GM23248 (cell line): ENCODE measurements at regions of chr4 and their contacts with region 1.

Region 1: DNA sequence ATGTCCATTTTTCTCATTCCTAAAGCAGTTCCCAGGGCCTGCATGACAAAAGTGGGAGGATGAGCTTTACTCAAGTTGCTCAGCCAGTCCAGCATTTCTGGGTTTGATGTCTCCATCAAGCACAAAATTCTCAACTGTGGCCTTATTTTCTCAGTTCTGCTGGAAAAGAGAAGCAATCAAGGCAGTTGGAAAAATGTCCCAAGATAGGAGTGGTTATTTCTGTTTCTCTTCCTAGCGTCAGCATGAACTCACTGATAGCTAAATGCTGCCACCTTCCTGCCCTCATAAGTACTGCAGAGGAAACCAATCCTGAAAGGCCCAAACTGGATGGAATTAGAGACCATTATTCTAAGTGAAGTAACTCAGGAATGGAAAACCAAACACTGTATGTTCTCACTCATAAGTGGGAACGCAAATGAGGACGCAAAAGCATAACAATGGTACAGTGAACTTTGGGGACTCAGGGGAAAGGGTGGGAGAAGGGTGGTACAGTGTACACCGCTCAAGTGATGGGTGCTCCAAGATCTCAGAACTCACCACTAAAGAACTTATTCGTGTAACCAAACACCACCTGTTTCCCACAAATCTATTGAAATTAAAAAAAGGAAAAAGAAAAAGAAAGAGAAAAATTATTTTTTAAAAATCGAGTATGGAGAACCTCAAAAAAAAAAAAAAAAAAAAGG is 29.6 kb downstream of the ADH7 start:
- DNase-seq: peak; percentile 83
- H3K4me3 ChIP-seq: no peak overlapping the region
- H3K27ac ChIP-seq: peak overlapping the region; percentile 82
- H3K4me1 ChIP-seq: peaks cover 22% of the 10 kb centered on the region
- H3K27me3 ChIP-seq: no peaks in the 10 kb centered on the region

Region 2: DNA sequence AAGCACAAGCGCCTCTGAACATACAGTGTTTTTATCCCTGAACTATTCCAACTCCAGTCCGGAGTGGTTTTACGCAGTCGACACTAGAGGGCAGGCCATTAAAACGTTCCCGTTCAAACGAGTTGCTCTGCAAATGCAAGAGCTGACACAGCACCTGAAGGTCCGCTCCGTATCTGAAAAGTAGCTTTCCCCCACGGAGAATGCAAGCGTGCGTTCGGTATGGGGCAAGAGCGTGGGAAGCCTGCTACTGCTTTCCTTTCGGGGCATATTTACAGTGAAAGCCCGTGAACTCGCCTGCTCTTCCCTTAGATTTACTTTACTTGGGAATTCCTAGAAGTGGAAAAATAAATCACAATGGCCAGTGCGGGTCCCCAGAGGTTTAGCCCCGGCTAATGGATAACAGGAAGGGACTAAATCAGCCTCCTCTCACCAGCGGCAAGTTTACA is 937.9 kb before region 1 on chr4:
- in situ Hi-C with region 1: loop called (anchors 25 kb)
- DNase-seq: peak; percentile 97
- H3K4me3 ChIP-seq: peak overlapping the region; percentile 72
- H3K27ac ChIP-seq: peak overlapping the region; percentile 82
- H3K4me1 ChIP-seq: peaks cover 21% of the 10 kb centered on the region
- H3K27me3 ChIP-seq: no peaks in the 10 kb centered on the region

Region 3: DNA sequence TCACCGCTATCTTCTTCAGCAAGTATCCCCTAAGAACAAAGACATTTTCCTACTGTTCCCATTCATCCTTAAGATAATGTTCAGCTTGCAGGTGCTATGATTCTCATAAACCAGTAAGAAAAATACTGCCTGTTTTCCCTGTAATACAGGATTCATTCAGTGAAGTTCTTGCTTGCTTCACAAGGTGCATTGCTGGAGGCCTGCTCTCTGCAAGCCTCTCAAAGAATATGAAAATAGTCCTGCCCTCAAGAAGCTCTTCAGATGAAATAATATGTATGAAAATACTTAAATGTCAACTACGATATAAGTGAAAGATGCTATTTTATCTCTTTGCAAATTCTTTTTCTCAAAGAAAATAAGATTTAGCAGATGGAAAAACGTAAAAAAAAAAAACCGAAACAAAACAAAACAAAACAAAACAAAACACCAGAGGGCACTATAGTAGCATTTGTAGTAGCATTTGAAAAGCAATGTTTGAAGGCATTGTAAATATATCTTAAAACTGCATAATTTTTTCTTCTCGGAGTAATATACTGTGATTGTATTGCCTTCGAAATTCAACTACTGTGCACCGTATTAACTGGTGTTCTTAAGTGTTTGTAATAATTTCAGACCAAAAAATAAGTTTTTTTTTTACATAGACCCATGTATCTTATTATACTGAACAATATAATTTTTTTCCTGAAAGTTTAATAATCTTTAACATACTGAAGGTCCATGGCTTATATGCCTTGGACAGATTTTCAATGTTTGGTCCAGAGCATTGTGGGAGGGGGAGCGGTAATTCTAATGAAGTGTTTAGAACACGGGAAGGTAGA is 287.5 kb before region 1 on chr4:
- in situ Hi-C with region 1: loop called (anchors 25 kb)
- DNase-seq: peak; percentile 58
- H3K4me3 ChIP-seq: no peak overlapping the region
- H3K27ac ChIP-seq: no peak overlapping the region
- H3K4me1 ChIP-seq: 0 out of 2 replicates have a peak, but pooled peaks cover 2% of the 10 kb centered on the region
- H3K27me3 ChIP-seq: no peaks in the 10 kb centered on the region

Region 4: GRCh38 chr4:99144070-99144469 is 261.5 kb before region 1 on chr4 and contains the start of gene ADH4:
- in situ Hi-C with region 1: no loop called
- DNase-seq: peak; percentile 35
- H3K4me3 ChIP-seq: no peak within 1 kb of the TSS
- H3K27ac ChIP-seq: no peak within 1 kb of the TSS
- H3K4me1 ChIP-seq: no peaks in the 10 kb centered on the region
- H3K27me3 ChIP-seq: no peaks in the 10 kb centered on the region
- total RNA-seq, gene ADH4: not detected in 2 replicates

Region 5: GRCh38 chr4:99205153-99205979 is 200.2 kb before region 1 on chr4:
- in situ Hi-C with region 1: loop called (anchors 10 kb)
- DNase-seq: peak; percentile 76
- H3K4me3 ChIP-seq: no peak overlapping the region
- H3K27ac ChIP-seq: peak overlapping the region; percentile 32
- H3K4me1 ChIP-seq: peaks cover 37% of the 10 kb centered on the region
- H3K27me3 ChIP-seq: no peaks in the 10 kb centered on the region

Region 6: DNA sequence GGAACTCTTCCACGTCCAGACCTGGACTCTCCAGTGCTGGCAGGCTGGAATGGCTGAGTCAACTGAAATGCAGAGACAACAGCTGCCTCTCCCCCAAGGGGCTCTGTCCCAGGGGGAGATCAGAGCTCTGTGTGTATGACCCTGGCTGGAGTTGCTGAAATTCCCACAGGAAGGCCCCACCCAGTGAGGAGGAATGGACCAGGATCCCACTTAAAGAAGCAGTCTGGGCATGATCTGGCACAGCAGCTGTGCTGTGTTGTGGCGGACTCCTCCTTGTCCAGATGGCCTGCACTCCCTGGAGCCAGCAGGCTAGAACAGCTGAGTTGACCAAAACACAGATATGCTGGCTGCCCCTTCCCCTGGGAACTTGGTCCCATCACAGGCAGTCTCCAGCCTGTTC is 130.7 kb after region 1 on chr4:
- in situ Hi-C with region 1: no loop called
- DNase-seq: no peak
- H3K4me3 ChIP-seq: no peak overlapping the region
- H3K27ac ChIP-seq: no peak overlapping the region
- H3K4me1 ChIP-seq: no peaks in the 10 kb centered on the region
- H3K27me3 ChIP-seq: no peaks in the 10 kb centered on the region